Ascending aorta (tissue), 2 donors: ENCODE measurements at regions of chr3 and their contacts with region 1.

Region 1: GRCh38 chr3:12984023-12984823 is 89.0 kb downstream of the IQSEC1 start:
- DNase-seq: peak in 1 of 2 donors; percentile 90
- H3K4me3 ChIP-seq: no peak overlapping the region
- H3K27ac ChIP-seq: no peak overlapping the region
- H3K4me1 ChIP-seq: no peaks in the 10 kb centered on the region
- H3K27me3 ChIP-seq: no peaks in the 10 kb centered on the region
- CTCF ChIP-seq: peak; percentile 78 to 86 (median 83)

Region 2: GRCh38 chr3:12891985-12892839 is 92.0 kb before region 1 on chr3:
- intact Hi-C with region 1: loop called (anchors 10 kb)
- DNase-seq: peak in 1 of 2 donors; percentile 75
- H3K4me3 ChIP-seq: peak overlapping the region in 1 of 2 donors; percentile 53
- H3K27ac ChIP-seq: peak overlapping the region; percentile 48 to 58
- H3K4me1 ChIP-seq: peaks cover 9 to 18% of the 10 kb centered on the region in 2 donors
- H3K27me3 ChIP-seq: no peaks in the 10 kb centered on the region
- CTCF ChIP-seq: peak; percentile 85 to 93 (median 90)

Region 3: DNA sequence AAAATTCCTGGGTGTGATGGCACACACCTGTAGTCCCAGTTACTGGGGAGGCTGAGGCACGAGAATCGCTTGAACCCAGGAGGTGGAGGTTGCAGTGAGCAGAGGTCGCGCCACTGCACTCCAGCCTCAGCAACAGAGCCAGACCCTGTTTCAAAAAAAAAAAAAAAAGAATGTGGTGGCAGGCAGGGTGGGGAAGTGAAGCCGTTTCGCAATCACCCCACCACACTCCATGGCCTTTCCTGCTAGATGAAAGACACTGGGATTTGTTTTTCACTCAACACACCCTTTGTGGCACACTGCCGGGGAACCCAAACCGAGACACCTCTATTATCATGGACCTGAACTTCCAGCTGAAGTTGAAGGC is 261.4 kb after region 1 on chr3:
- intact Hi-C with region 1: no loop called
- DNase-seq: no peak
- H3K4me3 ChIP-seq: no peak overlapping the region
- H3K27ac ChIP-seq: no peak overlapping the region
- H3K4me1 ChIP-seq: no peaks in the 10 kb centered on the region
- H3K27me3 ChIP-seq: no peaks in the 10 kb centered on the region
- CTCF ChIP-seq: no peak

Region 4: GRCh38 chr3:13581485-13582380 is 597.5 kb after region 1 on chr3:
- intact Hi-C with region 1: no loop called
- DNase-seq: no peak
- H3K4me3 ChIP-seq: no peak overlapping the region
- H3K27ac ChIP-seq: no peak overlapping the region
- H3K4me1 ChIP-seq: no peaks in the 10 kb centered on the region
- H3K27me3 ChIP-seq: no peaks in the 10 kb centered on the region
- CTCF ChIP-seq: no peak